ENCODE measurements at regions of chr6 and their contacts with region 1.

Region 1: DNA sequence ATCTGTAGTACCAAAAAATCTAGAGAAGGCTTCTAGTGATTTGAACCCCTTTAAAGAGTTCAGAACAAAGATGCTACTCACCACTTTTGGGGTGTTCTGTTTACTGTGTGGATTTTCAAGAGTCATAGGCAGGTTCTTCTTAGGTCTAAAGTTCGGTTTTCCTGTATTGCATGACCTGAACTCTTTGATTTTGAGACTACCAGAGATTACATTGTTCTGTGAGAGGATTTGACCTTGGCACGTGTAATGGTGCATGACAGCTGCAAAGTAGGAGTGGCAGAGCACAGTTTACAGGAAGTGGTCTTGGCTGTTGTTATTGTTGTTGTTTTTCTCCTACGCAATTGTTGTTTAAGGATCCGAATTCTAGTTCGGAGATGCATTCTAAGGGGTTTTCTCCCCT is 592.7 kb downstream of the EPHA7 start:
- DNase-seq: no peak
- ATAC-seq: no peak
- H3K4me3 ChIP-seq: no peak overlapping the region
- H3K27ac ChIP-seq: no peak overlapping the region
- H3K4me1 ChIP-seq: no peaks in the 10 kb centered on the region
- H3K27me3 ChIP-seq: no peaks in the 10 kb centered on the region
- CTCF ChIP-seq: no peak
- POLR2A ChIP-seq: no peak

Region 2: DNA sequence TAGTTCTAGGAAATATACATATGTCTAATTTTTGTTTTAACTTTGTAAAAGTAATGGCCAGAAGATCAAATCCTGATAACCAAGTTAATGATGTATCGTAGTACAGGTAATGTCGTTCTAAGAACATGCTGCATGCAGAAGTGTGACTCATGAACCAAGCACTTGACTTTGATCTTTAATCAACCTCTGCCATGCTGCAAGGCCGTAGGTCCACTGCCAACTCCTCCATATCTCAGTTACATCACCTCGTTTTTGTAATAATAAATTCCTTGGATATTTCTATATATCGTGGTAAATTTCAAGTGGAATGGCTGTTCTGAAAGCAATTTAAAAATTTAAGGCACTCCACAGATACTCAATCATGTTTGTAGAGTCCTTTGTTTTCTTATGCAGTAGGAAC is 179.0 kb before region 1 on chr6:
- intact Hi-C with region 1: loop called in 1 of 10 experiments (anchors 10 kb)
- DNase-seq: no peak
- ATAC-seq: no peak
- H3K4me3 ChIP-seq: no peak overlapping the region
- H3K27ac ChIP-seq: no peak overlapping the region
- H3K4me1 ChIP-seq: no peaks in the 10 kb centered on the region
- H3K27me3 ChIP-seq: no peaks in the 10 kb centered on the region
- CTCF ChIP-seq: no peak
- POLR2A ChIP-seq: no peak

Region 3: DNA sequence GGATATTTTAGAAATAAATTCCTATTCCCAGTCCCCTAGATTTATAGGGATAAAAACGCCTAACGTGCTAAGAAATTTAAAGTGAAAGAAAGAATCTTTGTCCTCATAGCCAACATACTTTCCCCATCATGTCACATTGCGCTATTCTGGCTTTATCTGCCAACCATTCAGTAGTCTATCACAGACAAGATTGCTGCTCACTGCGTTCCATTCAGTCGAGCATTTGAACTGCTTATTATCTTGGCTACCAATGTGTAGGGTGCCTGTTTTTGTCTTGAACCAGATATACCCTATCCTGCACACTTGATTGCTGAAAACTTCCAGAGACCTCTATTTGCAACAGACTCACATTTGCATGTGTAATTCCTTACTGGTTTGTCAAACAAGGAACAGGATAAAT is 158.8 kb before region 1 on chr6:
- intact Hi-C with region 1: no loop called
- DNase-seq: peak in 2 of 5 donors; percentile 16 to 29
- ATAC-seq: peak; percentile 91 to 99 (median 98)
- H3K4me3 ChIP-seq: peak overlapping the region in 3 of 12 donors; percentile 0 to 8 (median 4)
- H3K27ac ChIP-seq: peak overlapping the region in 5 of 12 donors; percentile 11 to 63 (median 51)
- H3K4me1 ChIP-seq: peaks cover 0 to 12% (median 2%) of the 10 kb centered on the region in 12 donors
- H3K27me3 ChIP-seq: no peaks in the 10 kb centered on the region
- CTCF ChIP-seq: no peak
- POLR2A ChIP-seq: no peak